ENCODE measurements at regions of chr9 and their contacts with region 1.

Region 1: DNA sequence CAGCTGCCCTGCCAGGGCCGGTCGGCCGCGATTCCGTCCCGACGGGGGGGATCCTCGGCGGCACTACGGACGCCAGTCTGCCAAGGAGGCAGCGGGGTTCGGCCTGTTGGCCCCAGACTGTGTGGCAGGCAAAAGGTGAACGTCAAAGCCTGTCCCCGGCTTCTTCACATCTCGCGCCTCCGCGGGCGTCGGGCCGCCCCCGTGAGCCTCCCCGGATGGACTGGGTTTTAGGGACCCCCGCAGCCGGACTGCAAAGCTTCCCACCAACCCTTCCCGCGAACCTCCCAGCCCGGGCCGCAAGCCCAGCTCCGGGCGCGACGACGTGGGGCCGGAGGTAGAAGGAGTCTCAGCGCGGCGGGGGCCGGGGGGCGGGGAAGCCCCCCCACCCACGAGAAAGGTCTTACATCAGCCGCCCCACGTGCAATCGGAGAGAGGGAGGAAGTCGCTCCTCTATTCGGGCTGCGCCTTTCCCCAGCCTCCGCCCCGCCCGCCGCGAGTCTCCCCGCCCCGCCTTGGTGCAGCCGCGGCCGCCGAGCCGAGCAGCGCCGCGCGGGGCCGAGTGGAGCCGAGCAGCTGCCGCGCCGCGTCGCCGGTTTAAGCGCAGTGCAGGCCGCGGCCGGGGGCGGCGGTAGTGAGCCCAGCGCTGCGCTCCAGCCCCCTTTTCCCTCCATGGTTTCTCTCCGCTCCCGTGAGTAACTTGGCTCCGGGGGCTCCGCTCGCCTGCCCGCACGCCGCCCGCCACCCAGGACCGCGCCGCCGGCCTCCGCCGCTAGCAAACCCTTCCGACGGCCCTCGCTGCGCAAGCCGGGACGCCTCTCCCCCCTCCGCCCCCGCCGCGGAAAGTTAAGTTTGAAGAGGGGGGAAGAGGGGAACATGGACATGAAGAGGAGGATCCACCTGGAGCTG is at the start of gene ANP32B:
- DNase-seq: peak; percentile 85 to 97 (median 89)
- ATAC-seq: peak; percentile 82
- H3K4me3 ChIP-seq: peak within 1 kb of the TSS; percentile 89
- H3K27ac ChIP-seq: peak within 1 kb of the TSS; percentile 99
- H3K4me1 ChIP-seq: peaks cover 33 to 52% of the 10 kb centered on the region in 2 experiments; a peak in 4 of 5 replicates
- H3K27me3 ChIP-seq: no peaks in the 10 kb centered on the region
- CTCF ChIP-seq: peak; percentile 69 to 96 (median 92)
- EP300 ChIP-seq: peak; percentile 66; the same call in 1 of the 2 replicates
- POLR2A ChIP-seq: peak; percentile 78
- RAD21 ChIP-seq: peak in 1 of 2 experiments; percentile 54; a peak in 3 of 4 replicates
- polyA plus RNA-seq, gene ANP32B: 87.2 to 141 TPM

Region 2: GRCh38 chr9:97753975-97754374 is 229.0 kb before region 1 on chr9:
- CTCF ChIA-PET with region 1: no interaction called
- POLR2A ChIA-PET with region 1: no interaction called
- in situ Hi-C with region 1: no loop called
- intact Hi-C with region 1: no loop called
- DNase-seq: no peak
- ATAC-seq: no peak
- H3K4me3 ChIP-seq: no peak overlapping the region
- H3K27ac ChIP-seq: no peak overlapping the region
- H3K4me1 ChIP-seq: no peaks in the 10 kb centered on the region
- H3K27me3 ChIP-seq: peaks cover 3 to 17% of the 10 kb centered on the region in 2 experiments; a peak in 3 of 5 replicates
- CTCF ChIP-seq: no peak
- EP300 ChIP-seq: no peak
- POLR2A ChIP-seq: no peak
- RAD21 ChIP-seq: no peak

Region 3: GRCh38 chr9:97934321-97935115 is 48.4 kb before region 1 on chr9:
- CTCF ChIA-PET with region 1: no interaction called
- POLR2A ChIA-PET with region 1: interaction called, 10 read pairs
- in situ Hi-C with region 1: no loop called
- intact Hi-C with region 1: no loop called
- DNase-seq: no peak
- ATAC-seq: peak; percentile 8
- H3K4me3 ChIP-seq: peak overlapping the region; percentile 43
- H3K27ac ChIP-seq: peak overlapping the region; percentile 79
- H3K4me1 ChIP-seq: peaks cover 6 to 38% of the 10 kb centered on the region in 2 experiments; a peak in 4 of 5 replicates
- H3K27me3 ChIP-seq: no peaks in the 10 kb centered on the region
- CTCF ChIP-seq: no peak
- EP300 ChIP-seq: no peak
- POLR2A ChIP-seq: no peak
- RAD21 ChIP-seq: no peak

Region 4: GRCh38 chr9:97954550-97954989 is 28.4 kb before region 1 on chr9:
- CTCF ChIA-PET with region 1: no interaction called
- POLR2A ChIA-PET with region 1: interaction called, 45 read pairs
- in situ Hi-C with region 1: no loop called
- intact Hi-C with region 1: no loop called
- DNase-seq: peak; percentile 67 to 92 (median 76)
- ATAC-seq: peak; percentile 94
- H3K4me3 ChIP-seq: no peak overlapping the region
- H3K27ac ChIP-seq: peak overlapping the region; percentile 64
- H3K4me1 ChIP-seq: peaks cover 25 to 34% of the 10 kb centered on the region in 2 experiments; a peak in 4 of 5 replicates
- H3K27me3 ChIP-seq: no peaks in the 10 kb centered on the region
- CTCF ChIP-seq: peak; percentile 88 to 92 (median 88)
- EP300 ChIP-seq: peak; percentile 28
- POLR2A ChIP-seq: no peak
- RAD21 ChIP-seq: peak; percentile 83 to 94

Region 5: DNA sequence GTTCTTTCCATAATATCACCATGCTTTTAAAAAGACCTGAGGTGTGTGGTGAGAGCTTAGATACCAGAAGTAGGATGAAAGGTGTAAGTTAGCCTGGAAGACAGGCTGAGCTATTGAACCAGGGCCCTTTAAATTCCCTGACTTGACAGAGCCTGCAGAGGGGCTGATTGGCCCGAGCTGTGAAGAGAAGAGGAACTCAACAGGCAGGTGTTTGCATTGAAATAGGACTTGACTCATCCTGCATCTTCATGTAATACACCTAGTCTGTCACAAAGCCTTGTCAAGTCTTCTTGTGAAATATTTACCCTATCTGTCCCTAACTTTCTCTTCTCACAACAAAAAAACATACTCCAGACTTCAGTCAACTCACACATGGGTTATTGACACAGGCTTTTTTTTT is 16.4 kb before region 1 on chr9:
- CTCF ChIA-PET with region 1: no interaction called
- POLR2A ChIA-PET with region 1: interaction called, 84 read pairs
- in situ Hi-C with region 1: no loop called
- intact Hi-C with region 1: loop called (anchors 2 kb)
- DNase-seq: peak in 1 of 4 experiments; percentile 30
- ATAC-seq: peak; percentile 33
- H3K4me3 ChIP-seq: no peak overlapping the region
- H3K27ac ChIP-seq: no peak overlapping the region
- H3K4me1 ChIP-seq: peaks cover 16 to 39% of the 10 kb centered on the region in 2 experiments
- H3K27me3 ChIP-seq: no peaks in the 10 kb centered on the region
- CTCF ChIP-seq: no peak
- EP300 ChIP-seq: no peak
- POLR2A ChIP-seq: no peak
- RAD21 ChIP-seq: no peak

Region 6: GRCh38 chr9:98045234-98046179 is 62.6 kb after region 1 on chr9:
- CTCF ChIA-PET with region 1: no interaction called
- POLR2A ChIA-PET with region 1: interaction called, 4 read pairs
- in situ Hi-C with region 1: no loop called
- intact Hi-C with region 1: loop called (anchors 5 kb)
- DNase-seq: peak; percentile 50 to 90 (median 52)
- ATAC-seq: peak; percentile 87
- H3K4me3 ChIP-seq: peak overlapping the region; percentile 55
- H3K27ac ChIP-seq: peak overlapping the region; percentile 90
- H3K4me1 ChIP-seq: peaks cover 12 to 19% of the 10 kb centered on the region in 2 experiments; a peak in 3 of 5 replicates
- H3K27me3 ChIP-seq: no peaks in the 10 kb centered on the region
- CTCF ChIP-seq: peak; percentile 3 to 30 (median 23); a peak in 1 of 6 replicates
- EP300 ChIP-seq: no peak
- POLR2A ChIP-seq: peak; percentile 96
- RAD21 ChIP-seq: no peak